ENCODE measurements at regions of chr12 and their contacts with region 1.

Region 1: GRCh38 chr12:89352492-89353187 is at the start of gene DUSP6:
- DNase-seq: peak; percentile 96
- H3K4me3 Mint-ChIP-seq: peak within 1 kb of the TSS; percentile 97
- H3K27ac Mint-ChIP-seq: peak within 1 kb of the TSS; percentile 97
- H3K4me1 Mint-ChIP-seq: peaks cover 38% of the 10 kb centered on the region
- H3K27me3 Mint-ChIP-seq: no peaks in the 10 kb centered on the region
- total RNA-seq, gene DUSP6: 75.7 and 82.0 TPM in 2 replicates

Region 2: DNA sequence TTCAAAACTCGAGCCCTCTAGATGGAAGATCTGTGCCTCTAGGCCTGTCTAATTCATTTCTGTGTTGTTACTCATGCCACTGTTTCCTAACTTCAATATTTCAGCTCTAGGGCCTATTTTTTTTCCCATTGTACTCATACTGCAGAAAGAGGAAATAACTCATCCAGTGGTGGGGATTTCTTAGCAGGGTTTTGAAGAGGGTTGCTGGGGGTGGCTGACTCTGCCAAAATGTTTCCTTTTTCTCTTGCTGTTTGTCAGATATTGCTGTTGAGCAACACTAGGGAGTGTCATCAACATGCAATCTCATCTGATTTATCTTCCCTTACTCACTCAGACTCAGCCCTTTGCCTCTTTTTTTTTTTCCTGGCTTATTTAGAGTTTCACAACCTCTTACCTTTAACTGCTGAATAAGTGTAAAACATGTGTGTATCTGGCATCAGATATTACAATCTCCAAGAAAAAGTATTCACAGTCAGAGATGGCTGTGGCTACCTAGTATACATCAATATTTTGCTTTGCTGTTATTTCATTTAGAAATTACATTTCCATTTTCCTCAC is 189.9 kb before region 1 on chr12:
- intact Hi-C with region 1: loop called (anchors 1 kb)
- DNase-seq: peak; percentile 55
- H3K4me3 Mint-ChIP-seq: no peak overlapping the region
- H3K27ac Mint-ChIP-seq: no peak overlapping the region
- H3K4me1 Mint-ChIP-seq: peaks cover 27% of the 10 kb centered on the region
- H3K27me3 Mint-ChIP-seq: no peaks in the 10 kb centered on the region

Region 3: DNA sequence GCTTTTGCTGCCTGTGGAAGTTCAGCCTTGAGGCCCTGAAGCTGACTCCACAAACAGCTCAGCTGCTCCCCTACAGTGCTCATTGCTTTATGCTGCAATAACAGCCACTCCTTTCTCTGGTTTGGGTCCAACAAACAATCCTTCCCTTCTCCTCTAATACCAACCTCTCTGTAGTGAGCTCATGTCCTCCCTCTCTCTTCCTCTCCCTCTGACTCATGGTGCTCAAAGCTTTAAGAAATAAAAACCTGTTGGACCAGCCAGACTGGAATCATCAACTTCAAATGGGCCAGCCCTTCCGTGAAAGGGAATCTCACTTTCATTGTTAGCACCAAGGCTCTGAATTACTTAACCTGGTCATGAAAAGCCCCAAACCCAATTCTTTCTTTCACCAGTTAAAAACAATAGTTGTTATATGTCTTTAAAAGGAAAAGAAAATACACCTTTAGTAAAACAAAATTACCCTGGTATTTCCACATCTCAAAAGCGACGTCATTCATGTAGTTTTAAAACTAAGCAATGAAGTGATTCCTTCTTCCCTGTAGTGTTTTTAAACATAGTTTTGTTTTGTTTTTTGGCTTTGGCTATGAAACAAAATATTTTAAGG is 126.7 kb before region 1 on chr12:
- intact Hi-C with region 1: loop called (anchors 1 kb)
- DNase-seq: no peak
- H3K4me3 Mint-ChIP-seq: peak overlapping the region; percentile 70
- H3K27ac Mint-ChIP-seq: peak overlapping the region; percentile 100
- H3K4me1 Mint-ChIP-seq: peaks cover 67% of the 10 kb centered on the region
- H3K27me3 Mint-ChIP-seq: no peaks in the 10 kb centered on the region

Region 4: GRCh38 chr12:89333564-89334252 is 18.9 kb before region 1 on chr12:
- intact Hi-C with region 1: loop called (anchors 2 kb)
- DNase-seq: peak; percentile 47
- H3K4me3 Mint-ChIP-seq: peak overlapping the region; percentile 54
- H3K27ac Mint-ChIP-seq: peak overlapping the region; percentile 83
- H3K4me1 Mint-ChIP-seq: peaks cover 41% of the 10 kb centered on the region
- H3K27me3 Mint-ChIP-seq: no peaks in the 10 kb centered on the region

Region 5: GRCh38 chr12:89389755-89390661 is 37.4 kb after region 1 on chr12:
- intact Hi-C with region 1: loop called (anchors 1 kb)
- DNase-seq: no peak
- H3K4me3 Mint-ChIP-seq: peak overlapping the region; percentile 2
- H3K27ac Mint-ChIP-seq: peak overlapping the region; percentile 87
- H3K4me1 Mint-ChIP-seq: peaks cover 33% of the 10 kb centered on the region
- H3K27me3 Mint-ChIP-seq: no peaks in the 10 kb centered on the region

Region 6: DNA sequence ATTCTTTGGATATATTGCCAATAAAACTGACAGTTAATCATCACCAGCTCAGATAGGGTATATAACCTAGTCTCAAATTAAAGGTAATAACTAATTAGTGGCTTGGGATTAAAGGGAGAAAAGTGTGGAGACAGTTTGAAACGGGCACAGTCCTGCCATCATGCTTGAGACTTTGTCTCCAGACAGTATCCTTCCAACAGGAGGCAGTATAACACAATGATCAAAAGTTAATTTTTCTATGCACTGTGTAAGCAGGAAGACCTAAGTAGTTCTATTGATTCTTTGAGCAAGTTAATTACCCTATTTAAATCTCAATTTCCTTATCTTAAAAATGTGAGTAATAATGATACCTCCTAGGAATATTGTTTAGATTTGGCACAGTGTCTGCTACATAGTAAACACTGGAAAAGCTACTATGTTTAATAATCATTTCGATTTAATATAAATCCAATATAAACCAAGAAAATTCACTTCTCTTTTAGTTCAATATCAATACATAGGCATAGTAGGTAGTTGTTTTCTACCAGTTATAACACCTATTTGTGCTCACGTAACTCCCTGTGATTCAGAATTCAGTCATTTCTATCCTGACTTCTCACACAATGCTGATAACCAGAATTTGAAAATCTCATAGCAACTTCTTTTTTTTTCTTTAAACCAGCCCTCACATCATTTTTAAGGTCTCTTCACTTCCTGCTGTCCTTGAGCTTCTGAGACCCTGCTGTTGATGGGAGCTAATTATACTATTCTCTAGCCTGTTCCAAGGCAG is 118.3 kb after region 1 on chr12:
- intact Hi-C with region 1: loop called (anchors 1 kb)
- DNase-seq: no peak
- H3K4me3 Mint-ChIP-seq: no peak overlapping the region
- H3K27ac Mint-ChIP-seq: peak overlapping the region; percentile 63
- H3K4me1 Mint-ChIP-seq: peaks cover 65% of the 10 kb centered on the region
- H3K27me3 Mint-ChIP-seq: no peaks in the 10 kb centered on the region

Region 7: DNA sequence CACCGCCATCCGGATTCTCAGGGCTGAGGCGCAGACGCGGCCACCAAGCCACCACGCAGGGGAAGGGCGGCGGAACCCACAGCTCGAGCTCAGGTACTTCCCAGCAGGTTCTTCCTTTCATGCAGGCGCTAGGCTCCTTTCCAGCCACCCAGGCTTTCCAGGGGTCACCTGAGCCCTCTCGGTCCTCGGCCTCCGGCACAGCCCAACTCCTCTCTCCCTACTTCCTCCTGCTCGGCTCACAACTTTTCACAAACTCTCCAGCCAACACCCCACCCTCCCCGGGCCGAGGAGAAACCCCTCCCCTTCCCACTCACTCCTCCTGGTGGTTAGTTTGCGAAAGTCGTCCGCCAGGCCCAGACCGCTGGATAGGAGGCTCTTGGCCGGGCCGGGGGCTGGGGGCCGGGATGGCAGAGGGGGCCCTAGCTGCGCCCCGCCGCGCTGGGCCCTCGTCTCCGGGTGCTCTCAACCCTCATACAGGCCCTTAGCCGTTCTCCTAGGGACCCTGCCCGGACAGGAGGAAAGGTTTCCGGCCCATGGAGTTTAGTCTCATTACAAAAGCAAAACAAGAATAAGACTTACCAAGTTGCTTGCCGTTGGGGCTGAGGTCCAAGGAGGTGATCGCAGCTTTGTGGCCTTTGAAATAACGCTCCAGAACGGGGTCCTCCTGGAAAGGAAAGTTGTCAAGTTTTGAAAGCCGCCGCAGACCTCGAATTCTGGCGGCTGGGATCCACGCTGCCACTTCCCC is 172.1 kb after region 1 on chr12 and contains the start of gene GALNT4:
- intact Hi-C with region 1: loop called (anchors 1 kb)
- DNase-seq: peak; percentile 75
- H3K4me3 Mint-ChIP-seq: peak within 1 kb of the TSS; percentile 99
- H3K27ac Mint-ChIP-seq: peak within 1 kb of the TSS; percentile 99
- H3K4me1 Mint-ChIP-seq: peaks cover 51% of the 10 kb centered on the region
- H3K27me3 Mint-ChIP-seq: no peaks in the 10 kb centered on the region
- total RNA-seq, gene GALNT4: 8.8 and 9.1 TPM in 2 replicates

Measured in activated T-helper 2 cell treated with anti-CD3 and anti-CD28 coated beads, Interferon-gamma antibody, Interleukin-2, Interleukin-4, amounts not matched to agents 10 μg/mL and 5 μg/mL and 100 μg/mL, durations not matched to agents 14 hours and 24 hours and 36 hours (primary cell).